ENCODE measurements at regions of chr3 and their contacts with region 1.

Region 1: DNA sequence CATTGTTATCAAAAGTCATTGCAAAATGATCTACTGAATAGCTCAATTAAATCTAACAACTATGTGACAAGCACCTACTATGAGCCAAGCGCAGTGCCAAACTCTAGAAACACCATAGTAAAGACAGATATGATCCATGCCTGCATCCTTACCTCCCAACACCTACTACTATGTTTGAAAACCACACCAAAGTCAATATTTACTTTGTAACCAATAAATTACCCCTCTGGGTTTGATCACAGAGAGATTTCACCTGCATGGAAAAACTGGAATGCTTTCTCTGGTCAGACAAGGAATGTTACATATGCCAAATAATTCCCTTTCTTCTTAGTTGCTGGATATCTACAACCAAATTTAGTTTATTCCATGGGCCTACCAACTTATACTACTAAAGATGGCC is 422.2 kb downstream of the FHIT start:
- DNase-seq: no peak
- H3K4me3 ChIP-seq: no peak overlapping the region
- H3K27ac ChIP-seq: no peak overlapping the region
- H3K4me1 ChIP-seq: no peaks in the 10 kb centered on the region
- H3K27me3 ChIP-seq: no peaks in the 10 kb centered on the region
- CTCF ChIP-seq: no peak
- EP300 ChIP-seq: no peak
- POLR2A ChIP-seq: no peak

Region 2: DNA sequence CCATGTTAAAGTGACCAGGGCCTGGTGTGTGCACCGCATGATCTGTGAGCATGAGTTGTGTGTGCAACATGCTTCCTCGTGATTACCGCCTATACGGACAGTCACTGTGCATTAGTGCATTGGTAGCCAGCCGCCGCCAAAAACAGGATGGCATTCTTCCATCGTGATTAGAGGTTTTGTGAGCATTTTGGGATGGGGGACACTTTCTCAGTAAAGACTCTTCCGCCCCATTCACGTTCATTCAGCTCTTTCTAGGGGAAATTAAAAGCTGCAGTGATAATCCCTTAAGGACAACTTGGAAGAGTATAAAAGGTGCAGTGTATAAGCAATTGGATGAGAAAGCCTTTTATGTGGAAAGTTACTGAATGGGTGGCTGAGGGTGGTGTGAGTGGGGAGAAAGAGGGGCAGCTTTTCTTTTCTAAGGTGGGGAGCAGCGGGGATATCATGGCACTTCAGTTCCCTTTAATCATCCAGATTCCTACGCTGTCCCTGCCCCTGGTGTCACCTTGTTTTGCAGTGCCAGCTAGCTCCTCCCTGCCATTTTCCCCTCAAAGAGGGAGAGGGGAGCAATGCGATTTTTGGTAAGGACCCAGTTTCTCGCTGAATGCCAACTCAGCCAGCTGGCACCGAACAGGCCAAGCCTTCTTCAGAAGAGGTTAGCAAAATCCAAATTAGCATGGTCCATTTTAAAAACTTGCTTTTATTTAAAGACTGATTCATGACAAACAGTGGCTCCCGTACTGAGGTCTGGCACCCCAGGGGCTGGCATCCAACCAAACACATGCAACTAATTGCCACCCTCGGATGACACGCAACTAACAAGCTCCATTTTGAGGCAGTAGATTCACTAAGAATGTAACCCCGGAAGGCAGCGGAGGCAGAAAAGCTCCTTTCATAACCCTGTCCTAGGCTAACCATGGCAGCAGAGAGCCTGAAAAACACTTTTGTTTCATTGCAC is 25.6 kb before region 1 on chr3:
- in situ Hi-C with region 1: no loop called
- intact Hi-C with region 1: loop called (anchors 1 kb)
- DNase-seq: no peak
- H3K4me3 ChIP-seq: no peak overlapping the region
- H3K27ac ChIP-seq: no peak overlapping the region
- H3K4me1 ChIP-seq: no peaks in the 10 kb centered on the region
- H3K27me3 ChIP-seq: no peaks in the 10 kb centered on the region
- CTCF ChIP-seq: no peak
- EP300 ChIP-seq: no peak
- POLR2A ChIP-seq: no peak

Region 3: DNA sequence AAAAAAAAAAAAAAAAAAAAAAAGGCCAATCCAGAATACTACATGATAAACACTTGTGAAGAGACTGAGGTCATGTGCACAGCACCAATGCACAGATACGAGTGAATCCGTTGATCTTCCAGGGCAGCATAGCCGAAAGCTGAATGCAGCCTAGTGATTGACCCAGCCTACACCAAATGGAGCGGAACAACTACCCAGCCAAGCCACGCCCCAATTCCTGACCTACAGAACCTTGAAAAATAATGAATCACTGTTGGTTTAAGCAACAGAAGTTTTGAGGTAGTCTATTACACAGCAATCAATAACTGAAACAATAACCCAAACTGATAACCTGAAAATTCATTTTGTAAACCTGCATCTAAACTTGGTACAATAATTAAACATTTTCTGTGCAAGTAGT is 61.2 kb after region 1 on chr3:
- in situ Hi-C with region 1: no loop called
- intact Hi-C with region 1: loop called (anchors 2 kb)
- DNase-seq: no peak
- H3K4me3 ChIP-seq: no peak overlapping the region
- H3K27ac ChIP-seq: no peak overlapping the region
- H3K4me1 ChIP-seq: no peaks in the 10 kb centered on the region
- H3K27me3 ChIP-seq: no peaks in the 10 kb centered on the region
- CTCF ChIP-seq: no peak
- EP300 ChIP-seq: no peak
- POLR2A ChIP-seq: no peak